Mammary epithelial cell (primary cell): ENCODE measurements at regions of chr18 and their contacts with region 1.

Region 1: DNA sequence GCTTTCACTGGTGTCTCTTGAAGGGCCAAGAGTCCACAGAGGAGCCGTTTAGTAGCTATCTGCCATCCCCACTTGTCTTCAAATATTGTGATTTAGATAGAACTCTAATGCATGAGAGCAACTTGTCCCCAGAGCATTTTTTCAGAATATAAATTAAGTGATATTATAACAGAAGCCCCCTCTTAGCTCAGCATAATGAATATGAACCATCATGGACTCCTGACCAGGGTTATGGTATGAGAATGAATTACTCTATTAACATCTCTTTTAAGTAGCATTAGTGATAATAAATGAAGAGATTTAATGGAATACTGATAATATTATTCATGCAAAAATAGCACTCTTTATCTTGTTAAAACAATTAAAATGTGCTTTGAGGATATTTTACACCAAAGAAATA is 709.6 kb downstream of the GALR1 start:
- DNase-seq: no peak
- H3K4me3 ChIP-seq: no peak overlapping the region
- H3K27ac ChIP-seq: no peak overlapping the region
- H3K4me1 ChIP-seq: no peaks in the 10 kb centered on the region
- H3K27me3 ChIP-seq: no peaks in the 10 kb centered on the region
- CTCF ChIP-seq: no peak

Region 2: DNA sequence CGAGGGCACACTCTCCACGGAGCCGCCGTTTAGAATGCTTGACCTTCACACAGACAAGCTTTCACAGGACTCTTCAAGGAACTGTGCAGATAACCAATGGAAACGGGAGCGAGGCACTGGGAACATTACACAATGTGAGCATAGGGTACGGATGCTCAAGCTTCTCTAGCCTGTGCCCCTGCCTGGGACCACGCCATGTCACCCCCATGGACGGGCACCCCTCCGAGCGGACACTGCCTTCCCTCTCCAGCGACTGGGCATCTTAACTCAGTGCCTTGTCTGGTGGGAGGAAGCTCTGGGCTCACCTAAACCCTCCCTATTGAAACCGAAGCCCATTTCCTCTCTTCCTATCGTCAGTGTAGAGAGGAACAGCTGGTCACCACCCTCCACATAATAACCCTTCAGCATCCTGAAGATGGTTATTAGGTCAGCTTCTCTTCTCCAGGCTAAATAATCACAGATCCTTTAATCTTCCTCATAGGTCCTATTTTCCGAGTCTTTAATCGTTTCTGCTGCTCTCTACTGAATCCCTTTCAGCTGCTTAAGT is 82.9 kb before region 1 on chr18:
- CTCF ChIA-PET with region 1: no interaction called
- dilution Hi-C with region 1: loop called (anchors 5 kb)
- in situ Hi-C with region 1: no loop called
- intact Hi-C with region 1: no loop called
- DNase-seq: no peak
- H3K4me3 ChIP-seq: no peak overlapping the region
- H3K27ac ChIP-seq: no peak overlapping the region
- H3K4me1 ChIP-seq: no peaks in the 10 kb centered on the region
- H3K27me3 ChIP-seq: no peaks in the 10 kb centered on the region
- CTCF ChIP-seq: no peak